ENCODE measurements at regions of chr2 and their contacts with region 1.

Region 1: GRCh38 chr2:16756831-16757644 is 91.4 kb upstream of the CYRIA start:
- DNase-seq: peak; percentile 59
- ATAC-seq: peak; percentile 98
- H3K4me3 ChIP-seq: no peak overlapping the region
- H3K27ac ChIP-seq: no peak overlapping the region
- H3K4me1 ChIP-seq: no peaks in the 10 kb centered on the region
- H3K27me3 ChIP-seq: peaks cover 0 to 9% of the 10 kb centered on the region in 2 experiments; a peak in 2 of 5 replicates
- CTCF ChIP-seq: peak; percentile 98
- EP300 ChIP-seq: no peak
- POLR2A ChIP-seq: no peak
- RAD21 ChIP-seq: peak; percentile 84

Region 2: GRCh38 chr2:16525265-16525887 is 231.7 kb before region 1 on chr2:
- CTCF ChIA-PET with region 1: no interaction called
- POLR2A ChIA-PET with region 1: no interaction called
- in situ Hi-C with region 1: no loop called
- intact Hi-C with region 1: loop called (anchors 1 kb)
- DNase-seq: peak; percentile 49
- ATAC-seq: peak; percentile 79
- H3K4me3 ChIP-seq: no peak overlapping the region
- H3K27ac ChIP-seq: no peak overlapping the region
- H3K4me1 ChIP-seq: no peaks in the 10 kb centered on the region
- H3K27me3 ChIP-seq: no peaks in the 10 kb centered on the region
- CTCF ChIP-seq: peak; percentile 81
- EP300 ChIP-seq: no peak
- POLR2A ChIP-seq: no peak
- RAD21 ChIP-seq: no peak

Region 3: DNA sequence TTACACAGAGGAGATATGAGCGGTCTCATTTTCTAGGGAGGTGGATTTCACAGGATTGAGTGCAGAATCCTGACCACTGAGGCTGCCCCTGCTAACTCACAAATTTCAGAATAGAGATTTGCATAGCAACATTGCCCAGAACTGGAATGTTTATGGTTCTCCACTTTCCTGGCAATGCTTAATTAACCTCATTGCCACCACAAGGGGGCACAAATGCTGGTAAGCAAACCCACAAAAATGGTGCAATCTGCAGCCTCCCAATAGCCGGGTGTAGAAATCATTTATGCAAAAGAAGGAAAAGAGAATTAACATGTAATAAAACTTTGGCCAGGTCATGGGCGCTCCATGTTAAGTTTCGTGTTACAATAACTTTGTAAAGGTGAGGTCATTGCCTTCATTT is 203.8 kb before region 1 on chr2:
- CTCF ChIA-PET with region 1: interaction called, 11 read pairs
- POLR2A ChIA-PET with region 1: no interaction called
- in situ Hi-C with region 1: no loop called
- intact Hi-C with region 1: loop called (anchors 1 kb)
- DNase-seq: peak; percentile 40
- ATAC-seq: peak; percentile 84
- H3K4me3 ChIP-seq: no peak overlapping the region
- H3K27ac ChIP-seq: no peak overlapping the region
- H3K4me1 ChIP-seq: no peaks in the 10 kb centered on the region
- H3K27me3 ChIP-seq: no peaks in the 10 kb centered on the region
- CTCF ChIP-seq: peak; percentile 63
- EP300 ChIP-seq: no peak
- POLR2A ChIP-seq: no peak
- RAD21 ChIP-seq: peak; percentile 50; the same call in 1 of the 2 replicates

Region 4: DNA sequence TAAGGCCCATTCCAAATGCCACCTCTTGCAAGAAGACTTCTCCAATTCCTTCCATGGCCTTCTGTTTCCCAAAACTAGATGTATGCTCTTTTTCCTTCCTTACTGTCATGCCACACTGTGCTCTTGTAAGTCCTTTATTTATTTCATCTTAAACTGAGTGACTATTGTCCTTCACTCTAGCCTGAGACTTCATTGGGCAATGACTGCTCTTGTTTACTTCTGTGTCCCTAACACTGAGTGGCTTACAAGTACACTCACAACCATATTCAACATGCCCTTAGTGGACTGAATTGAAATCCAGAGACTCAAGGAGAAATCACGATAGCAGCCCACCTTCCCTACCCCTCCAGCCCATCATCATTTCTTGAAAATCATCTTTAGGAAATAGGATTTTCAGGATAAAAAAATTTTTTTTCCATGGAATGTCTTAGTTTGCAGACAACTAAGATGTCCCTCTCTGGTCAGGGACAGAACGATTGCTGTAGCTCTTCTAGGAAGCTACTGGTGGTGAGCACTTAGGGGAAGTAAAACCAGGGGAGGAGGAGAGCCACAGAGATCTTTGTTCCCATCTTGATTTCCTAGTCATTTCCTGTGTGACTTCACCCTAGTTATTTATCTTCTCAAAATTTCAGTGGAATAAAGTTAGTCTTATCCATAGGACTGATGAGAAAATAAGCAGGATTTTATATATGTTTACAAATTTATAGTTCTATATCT is 172.1 kb before region 1 on chr2:
- CTCF ChIA-PET with region 1: no interaction called
- POLR2A ChIA-PET with region 1: no interaction called
- in situ Hi-C with region 1: no loop called
- intact Hi-C with region 1: no loop called
- DNase-seq: no peak
- ATAC-seq: no peak
- H3K4me3 ChIP-seq: no peak overlapping the region
- H3K27ac ChIP-seq: no peak overlapping the region
- H3K4me1 ChIP-seq: no peaks in the 10 kb centered on the region
- H3K27me3 ChIP-seq: no peaks in the 10 kb centered on the region
- CTCF ChIP-seq: no peak
- EP300 ChIP-seq: no peak
- POLR2A ChIP-seq: no peak
- RAD21 ChIP-seq: no peak

Region 5: DNA sequence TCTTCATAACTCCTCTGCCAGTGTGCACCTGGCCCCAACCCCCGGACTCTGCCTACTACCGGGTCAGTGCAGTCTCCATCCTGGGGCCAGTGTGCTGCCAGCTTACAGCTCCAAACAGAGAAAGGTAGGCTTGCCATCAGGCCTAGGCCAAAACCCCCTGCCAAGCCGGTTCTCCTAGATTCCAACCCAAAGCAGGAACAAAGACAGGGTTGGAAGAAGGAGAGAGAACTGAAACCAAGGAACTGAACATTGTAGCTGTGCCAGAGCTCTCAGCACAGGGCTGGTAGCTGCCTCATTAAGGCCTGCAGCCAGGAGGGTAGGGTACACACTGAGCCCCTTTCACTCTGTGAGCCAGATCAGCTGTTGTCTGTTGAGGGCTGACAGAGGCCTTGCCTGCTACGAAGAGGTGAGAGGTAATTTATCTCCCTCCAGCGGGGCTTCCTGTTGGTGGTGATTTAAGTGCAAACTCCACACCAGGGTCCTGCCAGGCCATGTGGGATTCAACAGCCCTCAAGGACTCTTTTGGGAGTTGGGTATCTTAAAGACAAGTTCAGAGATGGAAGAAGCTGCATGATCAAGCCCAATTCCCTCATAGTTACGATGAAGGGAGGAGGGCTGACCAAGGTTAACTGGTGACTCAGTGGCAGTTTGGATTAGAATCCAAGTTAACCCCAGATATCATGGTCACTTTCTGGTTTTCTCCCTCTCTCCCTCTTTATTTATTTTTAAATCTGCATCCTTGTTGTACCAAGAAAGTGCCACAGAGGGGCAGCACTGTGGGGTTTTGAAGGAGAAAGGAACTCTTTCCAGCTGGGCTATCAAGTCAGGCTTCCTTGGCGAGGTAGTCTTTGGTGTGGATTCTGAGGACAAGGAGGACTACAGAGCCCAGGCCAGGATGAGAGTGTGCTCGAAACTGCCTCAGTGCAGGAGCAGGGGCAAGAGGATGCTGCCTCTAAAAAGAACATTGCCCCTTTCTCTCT is 139.5 kb before region 1 on chr2:
- CTCF ChIA-PET with region 1: interaction called, 23 read pairs
- POLR2A ChIA-PET with region 1: no interaction called
- in situ Hi-C with region 1: loop called (anchors 5 kb)
- intact Hi-C with region 1: loop called (anchors 1 kb)
- DNase-seq: no peak
- ATAC-seq: peak; percentile 18; the same call in 1 of the 3 replicates
- H3K4me3 ChIP-seq: no peak overlapping the region
- H3K27ac ChIP-seq: no peak overlapping the region
- H3K4me1 ChIP-seq: no peaks in the 10 kb centered on the region
- H3K27me3 ChIP-seq: no peaks in the 10 kb centered on the region; a peak in 3 of 5 replicates
- CTCF ChIP-seq: peak; percentile 19; the same call in 1 of the 2 replicates
- EP300 ChIP-seq: no peak
- POLR2A ChIP-seq: no peak
- RAD21 ChIP-seq: no peak

Region 6: GRCh38 chr2:18001671-18002070 is 1244.6 kb after region 1 on chr2:
- CTCF ChIA-PET with region 1: no interaction called
- POLR2A ChIA-PET with region 1: no interaction called
- in situ Hi-C with region 1: no loop called
- intact Hi-C with region 1: no loop called
- DNase-seq: no peak
- ATAC-seq: peak; percentile 44; the same call in 1 of the 3 replicates
- H3K4me3 ChIP-seq: no peak overlapping the region
- H3K27ac ChIP-seq: no peak overlapping the region
- H3K4me1 ChIP-seq: no peaks in the 10 kb centered on the region
- H3K27me3 ChIP-seq: no peaks in the 10 kb centered on the region
- CTCF ChIP-seq: peak; percentile 27
- EP300 ChIP-seq: no peak
- POLR2A ChIP-seq: no peak
- RAD21 ChIP-seq: no peak

Measured in HepG2 (cell line).